GM12878 (cell line): ENCODE measurements at regions of chr6 and their contacts with region 1.

Region 1: DNA sequence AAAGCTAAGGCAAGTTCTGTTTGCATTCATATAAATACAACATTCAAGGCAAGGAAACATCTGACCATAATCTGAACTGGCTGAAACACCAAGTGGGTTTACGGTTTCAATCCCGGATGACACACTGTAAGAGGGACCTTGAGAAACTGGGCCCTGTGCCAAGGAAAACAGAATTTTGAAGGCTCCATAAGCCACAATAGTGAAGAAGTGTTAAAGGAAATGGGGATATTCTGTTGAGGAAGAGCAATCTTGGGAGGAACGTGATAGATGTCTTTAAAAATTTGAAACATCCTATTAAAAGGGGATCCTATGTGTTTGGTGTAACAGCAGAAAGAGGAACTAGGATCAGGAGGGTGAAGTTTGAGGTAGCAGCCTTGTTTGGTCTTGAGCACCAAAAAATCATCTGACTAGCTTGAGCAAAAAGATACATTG is 82.4 kb upstream of the TAB2 start:
- DNase-seq: peak; percentile 69
- ATAC-seq: peak; percentile 91
- H3K4me3 ChIP-seq: no peak overlapping the region
- H3K27ac ChIP-seq: peak overlapping the region; percentile 73
- H3K4me1 ChIP-seq: peaks cover 37% of the 10 kb centered on the region
- H3K27me3 ChIP-seq: no peaks in the 10 kb centered on the region
- CTCF ChIP-seq: no peak
- EP300 ChIP-seq: peak; percentile 37 to 71; a peak in 2 of 4 replicates
- POLR2A ChIP-seq: no peak
- RAD21 ChIP-seq: no peak

Region 2: GRCh38 chr6:149211046-149211571 is 24.0 kb before region 1 on chr6:
- CTCF ChIA-PET with region 1: interaction called, 10 read pairs
- POLR2A ChIA-PET with region 1: interaction called, 12 read pairs
- RAD21 ChIA-PET with region 1: interaction called, 16 read pairs
- SMC1A ChIA-PET with region 1: interaction called, 56 read pairs
- in situ Hi-C with region 1: no loop called
- intact Hi-C with region 1: no loop called
- DNase-seq: no peak
- ATAC-seq: peak; percentile 66
- H3K4me3 ChIP-seq: no peak overlapping the region
- H3K27ac ChIP-seq: peak overlapping the region; percentile 64
- H3K4me1 ChIP-seq: peaks cover 43% of the 10 kb centered on the region
- H3K27me3 ChIP-seq: no peaks in the 10 kb centered on the region
- CTCF ChIP-seq: no peak
- EP300 ChIP-seq: no peak
- POLR2A ChIP-seq: no peak
- RAD21 ChIP-seq: no peak

Region 3: GRCh38 chr6:149217466-149217888 is 17.7 kb before region 1 on chr6:
- CTCF ChIA-PET with region 1: interaction called, 10 read pairs
- POLR2A ChIA-PET with region 1: interaction called, 12 read pairs
- RAD21 ChIA-PET with region 1: interaction called, 16 read pairs
- SMC1A ChIA-PET with region 1: interaction called, 56 read pairs
- in situ Hi-C with region 1: no loop called
- intact Hi-C with region 1: no loop called
- DNase-seq: no peak
- ATAC-seq: peak; percentile 77
- H3K4me3 ChIP-seq: no peak overlapping the region
- H3K27ac ChIP-seq: no peak overlapping the region
- H3K4me1 ChIP-seq: peaks cover 34% of the 10 kb centered on the region
- H3K27me3 ChIP-seq: no peaks in the 10 kb centered on the region
- CTCF ChIP-seq: no peak
- EP300 ChIP-seq: no peak
- POLR2A ChIP-seq: no peak
- RAD21 ChIP-seq: no peak

Region 4: DNA sequence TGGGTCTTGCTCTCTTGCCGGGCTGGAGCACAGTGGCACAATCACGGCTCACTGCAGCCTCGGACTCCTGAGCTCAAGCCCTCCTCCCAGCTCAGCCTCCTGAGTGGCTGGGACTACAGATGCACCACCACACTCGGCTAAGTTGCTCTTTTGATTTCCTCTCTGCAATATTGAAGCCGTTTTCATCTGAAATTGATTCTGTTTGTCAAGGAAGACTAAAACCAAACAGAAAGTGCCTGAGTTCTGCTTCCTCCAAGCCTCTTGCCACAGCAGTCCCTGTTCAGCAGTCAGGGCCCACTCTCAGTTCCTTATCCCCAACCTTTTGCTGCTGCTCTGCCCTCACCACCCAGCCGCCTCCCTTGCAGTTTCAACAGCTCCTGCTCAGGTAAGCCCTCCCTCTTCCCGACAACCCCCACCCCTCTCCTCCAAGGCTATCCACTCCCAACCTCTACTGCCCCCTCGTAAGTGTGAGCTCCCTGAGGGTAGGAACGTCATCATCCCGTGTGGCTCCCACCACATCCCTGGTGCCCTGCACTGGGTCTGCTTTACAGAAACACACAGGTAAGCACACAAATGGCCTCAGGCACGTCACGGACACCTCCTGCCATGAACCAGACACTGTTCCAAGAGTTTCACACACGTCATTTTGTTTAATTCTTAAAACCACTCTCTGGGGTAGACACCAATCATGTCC is 11.7 kb after region 1 on chr6:
- CTCF ChIA-PET with region 1: no interaction called
- POLR2A ChIA-PET with region 1: no interaction called
- RAD21 ChIA-PET with region 1: no interaction called
- SMC1A ChIA-PET with region 1: interaction called, 17 read pairs
- in situ Hi-C with region 1: no loop called
- intact Hi-C with region 1: no loop called
- DNase-seq: peak; percentile 66
- ATAC-seq: peak; percentile 97
- H3K4me3 ChIP-seq: peak overlapping the region; percentile 46
- H3K27ac ChIP-seq: peak overlapping the region; percentile 35; the same call in 1 of the 2 replicates
- H3K4me1 ChIP-seq: peaks cover 18% of the 10 kb centered on the region
- H3K27me3 ChIP-seq: no peaks in the 10 kb centered on the region
- CTCF ChIP-seq: no peak
- EP300 ChIP-seq: peak; percentile 36 to 61; a peak in 1 of 4 replicates
- POLR2A ChIP-seq: no peak
- RAD21 ChIP-seq: no peak

Region 5: DNA sequence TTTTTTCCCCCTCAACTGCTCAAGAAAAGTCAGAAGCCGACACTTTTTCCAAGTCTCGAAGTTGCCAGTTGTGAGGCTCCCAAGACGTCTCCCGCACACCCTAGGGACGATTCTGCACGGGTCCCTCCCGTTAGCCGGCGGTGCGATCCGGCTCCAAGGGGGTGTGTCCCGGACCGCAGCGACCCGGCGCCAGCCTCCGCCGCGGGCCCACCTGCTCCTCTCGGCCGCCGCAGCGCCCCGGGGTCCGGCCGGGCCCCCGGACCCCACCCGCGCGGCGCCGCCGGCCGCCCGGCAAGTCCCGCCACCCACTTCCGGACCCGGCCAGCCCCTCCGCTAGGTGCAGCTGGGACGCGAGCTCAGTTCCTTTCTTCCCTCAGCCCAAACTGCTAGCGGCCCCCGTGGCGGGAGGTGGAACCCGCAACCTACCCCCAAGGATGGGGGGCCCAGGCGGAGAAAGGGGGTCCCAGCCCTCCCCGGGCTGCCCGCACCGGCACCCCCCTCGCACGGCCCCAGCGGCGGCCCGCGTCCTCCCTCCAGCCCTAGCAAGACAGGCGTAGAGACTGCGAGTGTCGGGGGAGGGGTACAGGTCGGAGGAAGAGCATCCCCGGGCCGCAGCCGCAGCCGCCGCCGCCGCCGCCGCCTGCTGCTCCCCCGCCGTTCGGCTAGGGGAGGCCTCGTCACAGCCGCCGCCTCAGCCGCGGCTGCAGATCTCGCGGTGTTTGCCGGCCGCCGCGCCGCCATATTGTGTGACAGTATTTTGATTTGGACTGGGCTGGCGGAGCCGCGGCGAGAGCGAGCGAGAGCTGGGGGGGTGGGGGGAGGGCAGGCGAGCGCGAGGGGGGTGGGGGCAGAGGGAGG is 81.9 kb after region 1 on chr6:
- CTCF ChIA-PET with region 1: interaction called, 3 read pairs
- POLR2A ChIA-PET with region 1: no interaction called
- RAD21 ChIA-PET with region 1: no interaction called
- SMC1A ChIA-PET with region 1: interaction called, 3 read pairs
- in situ Hi-C with region 1: no loop called
- intact Hi-C with region 1: loop called (anchors 5 kb)
- DNase-seq: peak; percentile 57
- ATAC-seq: peak; percentile 79
- H3K4me3 ChIP-seq: peak overlapping the region; percentile 97
- H3K27ac ChIP-seq: peak overlapping the region; percentile 96
- H3K4me1 ChIP-seq: peaks cover 3% of the 10 kb centered on the region; the same call in 1 of the 2 replicates
- H3K27me3 ChIP-seq: no peaks in the 10 kb centered on the region
- CTCF ChIP-seq: 0 out of 6 replicates have a peak, but pooled peaks of 1 of the 3 experiments have one; percentile 2
- EP300 ChIP-seq: no peak
- POLR2A ChIP-seq: peak; percentile 86
- RAD21 ChIP-seq: 0 out of 2 replicates have a peak, but pooled peaks have one; percentile 28

Region 6: GRCh38 chr6:149766156-149766769 is 531.1 kb after region 1 on chr6:
- CTCF ChIA-PET with region 1: no interaction called
- POLR2A ChIA-PET with region 1: no interaction called
- RAD21 ChIA-PET with region 1: no interaction called
- SMC1A ChIA-PET with region 1: no interaction called
- in situ Hi-C with region 1: no loop called
- intact Hi-C with region 1: no loop called
- DNase-seq: no peak
- ATAC-seq: no peak
- H3K4me3 ChIP-seq: no peak overlapping the region
- H3K27ac ChIP-seq: no peak overlapping the region
- H3K4me1 ChIP-seq: peaks cover 9% of the 10 kb centered on the region
- H3K27me3 ChIP-seq: no peaks in the 10 kb centered on the region
- CTCF ChIP-seq: no peak
- EP300 ChIP-seq: no peak
- POLR2A ChIP-seq: no peak
- RAD21 ChIP-seq: no peak